A673 (cell line): ENCODE measurements at regions of chr2 and their contacts with region 1.

Region 1: DNA sequence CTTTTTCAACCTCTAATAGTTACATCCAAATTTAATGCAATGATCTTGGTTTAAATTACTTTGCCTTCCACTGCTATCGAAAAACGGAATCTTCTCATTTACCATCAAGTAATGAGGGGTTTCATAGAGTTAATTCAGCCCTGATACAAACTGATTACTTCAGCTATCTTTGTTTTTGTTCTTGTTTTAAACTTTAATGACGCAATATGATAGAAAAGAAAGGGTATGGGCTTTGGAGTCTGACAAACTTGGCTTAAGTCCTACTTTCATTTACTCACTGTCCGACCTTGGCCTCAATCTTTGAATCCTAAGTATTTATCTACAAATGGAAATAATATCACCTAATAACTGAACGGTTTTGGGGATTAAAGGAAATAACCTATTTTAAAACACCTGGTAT is 16.1 kb downstream of the ADAM17 start:
- DNase-seq: no peak
- H3K4me3 ChIP-seq: peak overlapping the region; percentile 12
- H3K27ac ChIP-seq: peak overlapping the region; percentile 15
- H3K4me1 ChIP-seq: peaks cover 43% of the 10 kb centered on the region
- H3K27me3 ChIP-seq: no peaks in the 10 kb centered on the region
- CTCF ChIP-seq: no peak

Region 2: DNA sequence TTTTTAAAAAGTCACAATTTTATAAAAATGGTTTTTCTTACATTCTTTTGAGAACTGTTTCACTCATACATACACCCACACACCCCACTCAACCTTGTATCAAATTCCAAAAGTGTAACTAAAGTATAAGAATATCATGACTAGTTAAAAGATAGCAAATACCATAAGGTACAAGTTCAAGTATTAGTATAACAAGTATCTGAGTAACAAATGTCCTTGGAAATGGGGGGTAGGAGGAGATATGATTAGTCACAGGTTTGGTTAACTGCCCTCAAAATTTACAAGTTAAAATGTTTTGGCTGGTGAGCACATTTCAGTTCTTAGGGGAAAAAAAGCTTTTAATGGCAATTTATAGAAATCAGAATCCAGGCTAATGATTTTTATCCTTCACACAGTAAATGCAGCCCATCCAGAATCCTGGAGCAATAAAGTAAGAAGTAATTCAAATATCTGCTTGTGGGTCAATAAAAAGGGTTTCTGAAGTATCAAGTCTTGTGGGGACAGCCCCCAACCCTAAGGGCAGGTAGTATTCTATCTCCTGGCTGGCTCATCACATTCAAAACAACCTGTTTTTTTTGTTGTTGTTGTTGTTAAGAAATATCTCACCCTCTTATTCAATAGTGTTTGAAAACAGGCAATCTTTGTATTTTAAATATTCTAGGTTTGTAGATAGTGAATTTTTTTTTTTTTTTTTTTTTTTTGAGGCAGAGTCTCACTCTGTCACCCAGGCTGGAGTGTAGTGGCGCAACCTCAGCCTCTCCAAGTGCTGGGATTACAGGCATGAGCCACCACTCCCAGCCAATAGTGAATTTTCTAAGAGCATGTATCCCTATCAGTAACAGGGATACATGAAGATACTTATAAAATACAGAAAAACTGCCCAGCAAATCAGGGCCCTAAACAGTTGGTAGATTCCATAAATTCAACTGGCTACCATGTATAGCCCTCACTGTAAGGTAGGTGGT is 50.7 kb before region 1 on chr2:
- CTCF ChIA-PET with region 1: no interaction called
- POLR2A ChIA-PET with region 1: no interaction called
- intact Hi-C with region 1: no loop called
- DNase-seq: no peak
- H3K4me3 ChIP-seq: no peak overlapping the region
- H3K27ac ChIP-seq: no peak overlapping the region
- H3K4me1 ChIP-seq: no peaks in the 10 kb centered on the region
- H3K27me3 ChIP-seq: no peaks in the 10 kb centered on the region
- CTCF ChIP-seq: no peak

Region 3: DNA sequence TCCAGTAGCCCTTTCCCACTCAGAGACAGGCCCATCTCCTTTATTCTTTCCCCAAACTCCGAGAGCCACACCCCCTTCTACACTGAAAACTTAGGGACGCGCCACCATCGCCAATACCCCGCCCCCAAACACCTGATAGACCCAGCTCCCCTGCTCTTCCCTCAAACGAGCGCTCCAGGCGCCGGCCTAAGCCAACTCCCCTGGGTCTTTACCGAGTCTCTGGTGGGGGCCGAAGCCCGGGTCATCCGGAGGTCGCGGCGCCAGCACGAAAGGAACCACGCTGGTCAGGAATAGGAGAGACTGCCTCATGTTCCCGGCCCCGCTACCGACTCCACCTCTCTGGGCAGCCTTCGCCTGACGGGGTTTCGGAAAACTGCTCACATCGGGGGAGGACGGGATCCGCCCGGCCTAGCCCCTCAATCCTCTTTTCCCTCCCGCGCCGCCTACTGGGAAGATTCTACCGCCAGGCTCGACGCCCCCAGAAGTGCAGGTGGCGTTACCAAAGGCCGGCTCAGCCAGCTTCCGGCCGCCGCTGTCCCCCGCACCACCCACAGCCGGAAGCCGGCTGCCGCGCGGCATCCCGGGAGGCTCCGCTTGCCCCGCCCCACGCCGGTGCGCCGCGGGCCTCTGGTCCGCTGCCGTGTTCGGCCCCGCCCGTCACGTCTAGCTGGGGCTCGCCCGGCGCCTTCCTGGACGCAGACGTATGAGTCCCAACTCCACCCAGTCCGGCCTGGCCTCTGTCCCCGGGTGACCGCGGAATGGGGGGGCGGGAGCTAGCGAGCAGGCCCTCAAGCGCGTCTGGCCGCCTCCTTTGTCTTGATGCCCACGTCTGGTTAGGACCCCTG is 16.0 kb after region 1 on chr2 and contains the start of gene ADAM17:
- CTCF ChIA-PET with region 1: interaction called, 3 read pairs
- POLR2A ChIA-PET with region 1: interaction called, 13 read pairs
- intact Hi-C with region 1: no loop called
- DNase-seq: peak; percentile 96
- H3K4me3 ChIP-seq: peak within 1 kb of the TSS; percentile 82
- H3K27ac ChIP-seq: peak within 1 kb of the TSS; percentile 96
- H3K4me1 ChIP-seq: peaks cover 30% of the 10 kb centered on the region
- H3K27me3 ChIP-seq: no peaks in the 10 kb centered on the region
- CTCF ChIP-seq: peak; percentile 52
- total RNA-seq, gene ADAM17: 34.2 and 40.1 TPM in 2 replicates

Region 4: DNA sequence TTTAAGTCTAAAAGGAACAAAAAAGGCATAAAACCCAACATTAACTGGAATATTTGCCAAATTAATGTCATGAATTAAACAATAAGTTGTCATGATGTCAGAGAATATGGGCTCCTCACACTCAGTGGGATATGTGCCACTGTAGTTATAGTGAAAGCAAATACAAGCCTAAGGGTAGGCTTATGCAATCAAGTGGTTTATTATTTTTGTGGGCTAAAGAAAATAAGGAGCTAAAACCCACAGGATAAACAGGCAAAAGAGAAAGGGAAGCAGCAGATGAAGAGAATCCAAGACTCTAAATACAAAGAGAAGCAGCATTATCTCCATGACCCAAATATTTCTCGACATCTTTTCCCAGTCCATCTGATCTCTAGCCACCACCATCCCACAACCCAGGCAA is 73.8 kb after region 1 on chr2:
- CTCF ChIA-PET with region 1: no interaction called
- POLR2A ChIA-PET with region 1: no interaction called
- intact Hi-C with region 1: no loop called
- DNase-seq: no peak
- H3K4me3 ChIP-seq: no peak overlapping the region
- H3K27ac ChIP-seq: no peak overlapping the region
- H3K4me1 ChIP-seq: peaks cover 29% of the 10 kb centered on the region
- H3K27me3 ChIP-seq: no peaks in the 10 kb centered on the region
- CTCF ChIP-seq: no peak